GM12878 (cell line): ENCODE measurements at regions of chr21 and their contacts with region 1.

Region 1: DNA sequence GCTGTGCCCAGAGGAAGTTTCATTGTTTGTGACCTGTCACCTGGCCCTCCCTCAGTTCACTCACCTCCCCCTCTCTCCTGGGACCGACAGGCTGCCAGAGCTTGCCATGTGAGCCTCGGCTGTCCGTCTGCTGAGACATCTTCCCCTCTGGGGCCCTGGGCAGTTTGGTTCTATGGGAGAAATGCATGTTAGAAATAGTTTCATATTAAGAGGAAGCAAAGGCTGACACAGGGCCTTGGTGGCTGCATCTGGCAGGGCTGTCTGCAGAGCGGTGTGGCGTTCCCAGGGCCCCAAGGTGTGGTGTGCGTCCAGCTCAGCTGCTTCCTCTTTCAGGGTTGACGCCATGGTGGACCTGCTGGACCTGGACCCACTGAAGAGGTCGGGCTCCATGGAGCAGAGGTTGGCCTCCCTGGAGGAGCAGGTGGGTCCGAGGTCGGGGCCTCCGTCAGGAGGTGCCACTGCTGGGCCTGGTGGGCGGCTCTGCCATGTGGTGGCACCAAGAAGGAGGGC is 31.9 kb upstream of the LRRC3 start:
- DNase-seq: no peak
- ATAC-seq: no peak
- H3K4me3 ChIP-seq: no peak overlapping the region
- H3K27ac ChIP-seq: no peak overlapping the region
- H3K4me1 ChIP-seq: no peaks in the 10 kb centered on the region; the same call in 1 of the 2 replicates
- H3K27me3 ChIP-seq: no peaks in the 10 kb centered on the region
- CTCF ChIP-seq: no peak
- EP300 ChIP-seq: no peak
- POLR2A ChIP-seq: no peak
- RAD21 ChIP-seq: no peak

Region 2: DNA sequence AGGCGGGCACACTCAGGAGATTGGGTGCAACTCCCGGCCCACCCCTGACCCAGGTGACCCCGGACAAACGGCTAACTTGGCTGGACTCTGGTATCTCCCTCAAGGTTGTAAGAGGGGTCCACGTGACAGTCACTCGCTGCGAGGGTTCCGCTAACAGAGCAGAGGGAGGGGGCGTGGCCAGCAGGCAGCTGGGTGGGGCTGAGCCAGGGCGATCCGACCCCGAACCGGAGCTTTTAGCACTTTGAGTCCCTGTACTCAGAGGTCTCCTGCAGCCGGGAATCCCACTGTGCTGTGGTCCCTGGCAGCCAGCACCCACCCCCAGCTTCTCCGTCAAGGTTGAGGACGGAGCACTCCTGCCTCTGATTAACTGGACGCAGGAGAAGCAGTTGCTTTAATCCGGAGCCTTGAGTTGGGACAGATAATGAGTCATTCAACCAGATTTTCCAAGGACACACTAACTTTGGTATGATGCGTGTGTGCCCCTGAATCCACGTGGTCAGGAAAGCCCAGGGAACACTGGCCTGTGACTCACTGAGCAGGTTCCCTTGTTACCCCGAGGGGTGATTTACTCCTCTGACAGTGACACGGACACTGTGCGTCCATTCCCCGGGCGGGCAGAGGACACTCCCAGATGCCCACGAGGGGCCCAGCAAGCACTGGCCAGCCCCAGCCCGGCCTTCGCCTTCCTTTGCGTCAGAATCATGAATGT is 53.2 kb before region 1 on chr21:
- CTCF ChIA-PET with region 1: no interaction called
- POLR2A ChIA-PET with region 1: no interaction called
- RAD21 ChIA-PET with region 1: no interaction called
- SMC1A ChIA-PET with region 1: no interaction called
- in situ Hi-C with region 1: loop called (anchors 5 kb)
- intact Hi-C with region 1: no loop called
- DNase-seq: no peak
- ATAC-seq: no peak
- H3K4me3 ChIP-seq: no peak overlapping the region
- H3K27ac ChIP-seq: no peak overlapping the region
- H3K4me1 ChIP-seq: peaks cover 3% of the 10 kb centered on the region; the same call in 1 of the 2 replicates
- H3K27me3 ChIP-seq: no peaks in the 10 kb centered on the region
- CTCF ChIP-seq: no peak
- EP300 ChIP-seq: no peak
- POLR2A ChIP-seq: no peak
- RAD21 ChIP-seq: no peak